ENCODE measurements at regions of chr1 and their contacts with region 1.

Region 1: DNA sequence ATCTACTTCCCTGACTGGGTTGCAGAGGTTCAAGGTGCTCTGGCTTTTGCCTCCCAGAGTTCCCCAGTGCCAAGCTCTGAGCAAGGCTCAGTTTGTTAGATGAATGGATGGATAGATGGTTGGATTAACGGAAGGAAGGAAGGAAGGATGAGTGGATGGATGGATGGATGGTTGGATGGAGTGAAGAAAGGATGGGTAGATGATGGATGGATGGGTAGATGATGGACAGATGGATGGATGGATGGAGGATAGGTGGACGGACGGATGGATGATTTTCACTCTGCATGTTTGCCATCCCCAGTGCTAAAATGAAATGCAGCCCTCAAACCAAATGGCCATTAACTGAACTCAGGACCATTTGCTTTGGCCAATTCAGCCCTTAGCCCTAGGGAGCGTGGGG is 27.4 kb upstream of the TENT5C start:
- DNase-seq: peak; percentile 1
- H3K4me3 ChIP-seq: no peak overlapping the region
- H3K27ac ChIP-seq: no peak overlapping the region
- H3K4me1 ChIP-seq: peaks cover 0 to 2% (median 0%) of the 10 kb centered on the region in 4 donors
- H3K27me3 ChIP-seq: no peaks in the 10 kb centered on the region
- CTCF ChIP-seq: no peak
- EP300 ChIP-seq: no peak
- POLR2A ChIP-seq: no peak

Region 2: DNA sequence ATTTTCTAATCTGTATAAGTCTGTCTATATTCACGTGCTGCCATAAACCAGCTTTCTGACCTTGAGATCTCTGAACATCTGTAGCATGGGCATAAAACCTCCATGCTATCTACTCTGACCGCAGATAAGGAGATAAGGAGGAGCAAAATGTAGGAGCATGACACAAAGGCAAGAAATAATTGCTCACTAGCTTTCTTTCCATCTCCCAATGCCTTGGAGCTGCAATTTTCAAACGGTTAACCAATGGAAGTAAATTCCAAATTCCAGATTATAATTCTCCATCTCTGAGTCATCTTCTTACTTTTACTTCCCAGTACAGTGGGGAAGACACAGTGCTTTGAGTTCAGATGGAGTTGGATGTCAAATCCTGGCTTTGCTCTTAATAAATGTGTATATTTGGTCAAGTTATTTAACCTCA is 1049.3 kb before region 1 on chr1:
- in situ Hi-C with region 1: no loop called
- intact Hi-C with region 1: no loop called
- DNase-seq: no peak
- H3K4me3 ChIP-seq: no peak overlapping the region
- H3K27ac ChIP-seq: no peak overlapping the region
- H3K4me1 ChIP-seq: no peaks in the 10 kb centered on the region
- H3K27me3 ChIP-seq: no peaks in the 10 kb centered on the region
- CTCF ChIP-seq: no peak
- EP300 ChIP-seq: no peak
- POLR2A ChIP-seq: no peak

Region 3: DNA sequence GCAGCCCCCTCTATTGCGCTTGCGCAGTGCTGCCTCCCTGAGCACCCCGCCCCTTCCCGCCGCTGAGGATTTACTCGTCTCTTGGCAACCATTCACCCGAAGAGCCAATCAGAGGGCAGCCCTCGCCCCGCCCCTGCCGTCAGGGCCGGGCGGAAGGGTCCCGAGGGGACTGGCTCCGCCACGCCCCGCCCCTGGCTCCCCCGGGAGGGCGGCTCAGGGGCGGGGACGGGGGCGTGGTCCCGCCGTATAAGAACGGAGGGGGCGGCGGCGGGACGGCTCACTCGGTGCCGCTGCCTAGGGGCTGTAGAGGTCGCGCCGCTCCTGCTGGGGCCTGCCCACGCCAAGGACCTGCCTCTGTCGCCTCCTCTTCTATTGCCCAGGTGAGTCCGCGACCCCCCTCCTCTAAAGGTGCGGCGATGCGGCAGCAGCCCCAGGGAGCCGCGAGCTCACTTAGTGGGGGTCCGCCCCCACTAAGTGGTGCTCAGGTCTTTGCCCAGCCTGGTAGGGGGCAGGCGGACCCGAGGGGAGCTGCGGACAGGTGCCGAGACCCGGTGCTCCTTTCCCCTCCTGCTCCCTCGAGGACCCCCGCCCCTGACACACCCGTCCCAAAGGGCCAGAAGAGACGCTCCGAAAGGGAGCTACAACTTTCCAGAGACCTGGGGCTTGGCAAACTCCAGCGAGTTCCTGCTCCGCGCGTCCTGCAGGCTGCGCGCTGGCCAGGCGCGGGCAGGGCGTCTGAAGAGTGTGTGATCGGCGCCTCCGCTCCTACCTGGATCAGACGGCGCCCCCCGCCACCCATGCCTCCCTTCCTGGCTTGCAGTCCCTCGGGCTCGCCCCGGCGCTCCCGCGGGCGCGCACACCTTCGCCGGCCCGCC is 27.5 kb after region 1 on chr1 and contains the start of gene TENT5C:
- in situ Hi-C with region 1: no loop called
- intact Hi-C with region 1: loop called (anchors 1 kb)
- DNase-seq: peak; percentile 99
- H3K4me3 ChIP-seq: peak within 1 kb of the TSS; percentile 59 to 92 (median 76)
- H3K27ac ChIP-seq: peak within 1 kb of the TSS; percentile 91 to 97 (median 93)
- H3K4me1 ChIP-seq: peaks cover 2 to 42% (median 23%) of the 10 kb centered on the region in 4 donors
- H3K27me3 ChIP-seq: no peaks in the 10 kb centered on the region
- CTCF ChIP-seq: no peak
- EP300 ChIP-seq: peak; percentile 10
- POLR2A ChIP-seq: peak; percentile 97
- total RNA-seq, gene TENT5C: 3.4 to 30.8 (median 18.1) TPM

Region 4: DNA sequence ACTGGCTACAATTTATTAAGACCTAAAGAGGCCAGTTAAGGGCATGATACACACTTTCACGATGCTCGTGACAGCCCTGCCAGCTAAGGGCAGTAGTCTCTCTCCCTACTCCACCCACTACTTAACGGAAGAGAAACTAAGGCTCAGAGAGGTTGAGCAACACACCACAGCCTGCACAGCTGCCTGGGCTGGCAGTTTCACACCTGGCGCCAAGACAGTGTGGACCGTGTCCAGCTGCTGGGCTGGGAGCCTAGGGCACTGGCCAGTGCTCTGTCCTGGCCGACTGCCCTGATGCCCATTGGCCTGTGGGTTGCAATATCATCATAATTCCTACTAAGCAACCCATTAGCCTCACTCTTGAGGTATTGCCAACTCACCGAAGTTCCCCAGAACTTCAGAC is 55.0 kb after region 1 on chr1:
- in situ Hi-C with region 1: no loop called
- intact Hi-C with region 1: no loop called
- DNase-seq: no peak
- H3K4me3 ChIP-seq: no peak overlapping the region
- H3K27ac ChIP-seq: peak overlapping the region in 2 of 4 donors; percentile 53 to 67
- H3K4me1 ChIP-seq: no peaks in the 10 kb centered on the region
- H3K27me3 ChIP-seq: no peaks in the 10 kb centered on the region
- CTCF ChIP-seq: no peak
- EP300 ChIP-seq: no peak
- POLR2A ChIP-seq: no peak